Activated naive CD4-positive, alpha-beta T cell treated with anti-CD3 and anti-CD28 coated beads for 36 hours (primary cell): ENCODE measurements at regions of chr20 and their contacts with region 1.

Region 1: DNA sequence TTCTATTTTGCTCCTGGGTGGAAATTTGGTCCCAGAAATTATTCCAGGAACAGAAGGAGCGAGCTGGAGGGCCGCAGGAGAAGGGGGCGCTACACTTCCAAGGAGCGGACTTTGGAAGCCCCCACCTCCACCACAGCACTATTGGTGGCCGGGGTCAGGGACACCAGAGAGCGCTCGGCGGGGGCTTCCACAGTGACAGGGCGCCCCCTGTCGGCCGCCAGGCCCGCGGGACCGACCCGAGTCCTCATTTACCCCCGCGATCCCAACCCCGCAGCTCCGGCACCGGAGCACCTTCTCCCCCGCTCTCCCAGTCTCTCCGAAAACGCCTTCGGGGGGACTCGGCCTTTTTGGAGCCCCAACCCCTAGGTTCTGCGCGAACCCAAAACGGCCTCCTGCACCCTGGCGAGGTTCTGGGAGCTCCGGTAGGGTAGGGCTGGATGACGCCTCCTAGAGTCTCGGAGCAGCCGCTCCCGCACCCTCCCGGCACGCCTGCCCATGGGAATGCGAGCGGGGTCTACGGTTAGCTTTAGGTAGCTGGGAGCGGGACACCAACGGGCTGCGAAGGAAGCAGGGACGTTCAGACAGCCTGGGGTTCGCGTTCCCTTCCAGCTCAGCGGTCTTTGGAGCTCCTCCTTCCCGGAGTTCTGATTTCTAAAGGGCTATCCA is 2.4 kb upstream of the FOXA2 start:
- DNase-seq: peak; percentile 28
- H3K4me3 Mint-ChIP-seq: no peak overlapping the region
- H3K27ac Mint-ChIP-seq: no peak overlapping the region
- H3K4me1 Mint-ChIP-seq: peaks cover 3% of the 10 kb centered on the region
- H3K27me3 Mint-ChIP-seq: peaks cover 57% of the 10 kb centered on the region

Region 2: DNA sequence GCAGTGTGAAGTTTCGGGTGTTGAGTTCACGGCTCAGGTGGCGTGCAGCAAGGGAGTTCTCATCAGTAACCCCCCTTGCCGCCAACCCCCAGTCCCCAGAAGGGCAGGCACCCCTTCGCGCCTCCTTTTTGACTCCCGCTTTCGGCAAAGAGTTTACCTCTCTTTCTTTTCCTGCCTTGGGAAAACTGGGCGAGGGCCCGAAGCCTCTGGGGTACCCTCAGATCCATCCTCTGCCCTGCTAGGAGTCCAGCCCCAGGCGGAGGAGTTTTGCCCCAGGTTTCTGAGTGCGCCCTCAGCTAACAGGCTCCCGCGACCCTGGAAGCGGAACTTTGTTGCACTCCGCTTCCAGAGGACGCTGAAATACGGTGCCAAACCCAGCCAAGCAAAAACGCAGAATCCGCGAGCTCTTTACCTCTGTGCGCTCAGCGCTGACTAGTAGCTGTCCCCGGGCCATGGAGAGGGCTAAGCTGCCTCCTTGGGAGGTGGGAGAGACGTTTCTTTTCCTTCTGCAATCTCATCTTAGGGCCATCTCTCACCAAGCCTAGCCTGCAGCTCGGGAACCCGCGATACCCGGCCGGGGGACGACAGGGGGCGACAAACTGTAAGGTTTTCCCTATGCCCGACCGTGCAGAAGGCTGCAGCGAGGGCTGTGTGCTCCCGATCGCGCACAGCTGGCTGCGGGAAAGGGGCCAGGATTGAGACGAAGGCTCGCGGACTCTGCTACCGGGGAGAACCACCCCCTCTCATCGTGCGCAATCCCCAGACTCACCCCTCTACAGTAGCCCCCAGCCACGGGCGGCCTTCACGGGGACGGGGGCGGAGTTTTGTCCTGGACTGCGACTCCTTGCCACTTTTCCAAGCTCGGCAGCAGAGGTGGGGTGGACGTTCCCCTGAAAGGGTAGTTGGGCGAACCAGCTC is 884.0 kb before region 1 on chr20:
- CTCF ChIA-PET with region 1: no interaction called
- intact Hi-C with region 1: loop called (anchors 5 kb)
- DNase-seq: peak; percentile 71
- H3K4me3 Mint-ChIP-seq: no peak overlapping the region
- H3K27ac Mint-ChIP-seq: no peak overlapping the region
- H3K4me1 Mint-ChIP-seq: peaks cover 12% of the 10 kb centered on the region
- H3K27me3 Mint-ChIP-seq: peaks cover 83% of the 10 kb centered on the region